Activated CD4-positive, alpha-beta T cell treated with anti-CD3 and anti-CD28 coated beads, Interleukin-2, amount 10 ng/mL, durations not matched to agents 24 days and 14 days (primary cell): ENCODE measurements at regions of chr11 and their contacts with region 1.

Region 1: GRCh38 chr11:128290106-128290840 is 297.1 kb downstream of the ETS1 start:
- DNase-seq: peak; percentile 94
- H3K4me3 Mint-ChIP-seq: peak overlapping the region; percentile 93
- H3K27ac Mint-ChIP-seq: peak overlapping the region; percentile 99
- H3K4me1 Mint-ChIP-seq: peaks cover 90% of the 10 kb centered on the region
- H3K27me3 Mint-ChIP-seq: no peaks in the 10 kb centered on the region

Region 2: DNA sequence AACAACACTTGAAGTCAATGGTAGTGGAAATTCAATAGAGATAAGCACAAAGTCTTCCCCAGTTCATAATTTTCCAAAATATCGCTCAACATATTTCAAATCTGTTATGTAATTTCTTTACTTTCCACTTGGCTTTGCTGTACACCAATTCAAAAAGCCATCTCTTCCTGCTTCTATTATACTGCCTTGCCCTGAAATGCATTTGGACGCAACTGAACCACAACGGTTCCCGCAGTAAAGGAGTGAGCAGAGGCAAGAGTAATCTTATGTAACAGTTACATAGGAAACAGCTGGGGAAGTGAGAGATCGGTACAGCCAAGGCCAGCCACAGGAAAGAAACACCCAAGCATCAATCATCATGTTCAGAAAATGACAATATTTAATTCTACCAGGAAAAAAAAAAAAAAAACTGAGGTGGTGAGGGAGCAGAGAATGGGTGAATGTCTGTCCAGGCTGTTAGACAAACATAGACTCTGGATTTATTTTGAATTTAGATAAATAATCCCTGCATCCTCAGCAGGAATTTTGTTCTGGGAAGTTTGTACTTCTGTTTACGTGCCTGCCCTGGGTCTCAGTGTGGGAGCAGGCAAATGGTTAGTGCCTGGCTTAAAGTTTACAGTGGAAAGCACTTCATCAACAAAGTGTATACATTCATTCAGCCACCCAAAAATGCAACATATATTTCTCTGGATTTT is 95.1 kb before region 1 on chr11:
- intact Hi-C with region 1: loop called (anchors 1 kb)
- DNase-seq: peak; percentile 84
- H3K4me3 Mint-ChIP-seq: peak overlapping the region; percentile 1
- H3K27ac Mint-ChIP-seq: peak overlapping the region; percentile 18
- H3K4me1 Mint-ChIP-seq: peaks cover 29% of the 10 kb centered on the region
- H3K27me3 Mint-ChIP-seq: no peaks in the 10 kb centered on the region

Region 3: GRCh38 chr11:128246364-128246801 is 43.9 kb before region 1 on chr11:
- intact Hi-C with region 1: no loop called
- DNase-seq: no peak
- H3K4me3 Mint-ChIP-seq: no peak overlapping the region
- H3K27ac Mint-ChIP-seq: no peak overlapping the region
- H3K4me1 Mint-ChIP-seq: no peaks in the 10 kb centered on the region
- H3K27me3 Mint-ChIP-seq: peaks cover 10% of the 10 kb centered on the region

Region 4: GRCh38 chr11:128302425-128303186 is 12.3 kb after region 1 on chr11:
- intact Hi-C with region 1: loop called (anchors 1 kb)
- DNase-seq: peak; percentile 94
- H3K4me3 Mint-ChIP-seq: peak overlapping the region; percentile 81
- H3K27ac Mint-ChIP-seq: peak overlapping the region; percentile 93
- H3K4me1 Mint-ChIP-seq: peaks cover 70% of the 10 kb centered on the region
- H3K27me3 Mint-ChIP-seq: no peaks in the 10 kb centered on the region

Region 5: GRCh38 chr11:128472128-128473089 is 182.1 kb after region 1 on chr11:
- intact Hi-C with region 1: loop called (anchors 1 kb)
- DNase-seq: peak; percentile 91
- H3K4me3 Mint-ChIP-seq: peak overlapping the region; percentile 85
- H3K27ac Mint-ChIP-seq: peak overlapping the region; percentile 96
- H3K4me1 Mint-ChIP-seq: peaks cover 95% of the 10 kb centered on the region
- H3K27me3 Mint-ChIP-seq: no peaks in the 10 kb centered on the region

Region 6: DNA sequence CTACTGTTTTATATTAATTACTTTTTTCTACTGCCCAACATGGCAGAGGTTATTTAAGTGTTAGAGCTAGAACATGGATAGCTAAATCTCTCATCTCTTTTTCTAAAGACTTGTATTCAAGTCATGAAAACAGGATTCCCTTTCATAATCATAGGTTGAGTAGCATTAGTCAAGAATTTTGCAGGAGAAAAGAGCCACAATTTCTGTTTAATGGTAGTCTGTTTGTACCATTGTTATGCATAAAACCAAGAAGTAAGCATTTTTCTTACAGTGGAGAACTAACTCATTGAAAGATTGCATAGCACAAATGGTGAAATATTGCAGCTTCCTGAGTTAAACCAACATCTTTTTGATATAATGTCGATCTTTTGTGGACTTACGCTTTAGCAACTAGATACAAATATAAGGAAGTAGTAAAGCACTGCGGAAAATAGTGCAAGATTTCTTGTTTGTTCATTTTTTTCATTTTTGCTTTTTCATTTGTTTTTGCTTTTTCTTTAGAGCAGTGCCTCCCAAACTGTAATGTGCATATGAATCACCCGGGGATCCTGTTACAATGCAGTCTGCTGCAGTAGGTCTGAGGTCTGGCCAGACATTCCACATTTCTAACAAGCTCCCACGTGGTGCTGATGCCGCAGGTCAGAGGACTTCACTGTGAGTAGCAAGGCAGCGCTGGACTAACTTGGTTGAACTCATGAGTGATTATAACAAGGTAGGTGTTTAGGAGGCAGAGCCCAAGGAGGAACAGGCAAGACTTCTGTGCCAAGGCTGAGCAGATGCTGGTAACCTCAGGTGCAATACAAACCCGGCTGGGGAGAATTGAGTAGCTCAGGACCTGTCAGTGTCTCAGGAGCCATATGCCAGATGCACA is 292.5 kb after region 1 on chr11:
- intact Hi-C with region 1: loop called (anchors 1 kb)
- DNase-seq: no peak
- H3K4me3 Mint-ChIP-seq: peak overlapping the region; percentile 59
- H3K27ac Mint-ChIP-seq: peak overlapping the region; percentile 81
- H3K4me1 Mint-ChIP-seq: peaks cover 35% of the 10 kb centered on the region
- H3K27me3 Mint-ChIP-seq: peaks cover 7% of the 10 kb centered on the region

Region 7: DNA sequence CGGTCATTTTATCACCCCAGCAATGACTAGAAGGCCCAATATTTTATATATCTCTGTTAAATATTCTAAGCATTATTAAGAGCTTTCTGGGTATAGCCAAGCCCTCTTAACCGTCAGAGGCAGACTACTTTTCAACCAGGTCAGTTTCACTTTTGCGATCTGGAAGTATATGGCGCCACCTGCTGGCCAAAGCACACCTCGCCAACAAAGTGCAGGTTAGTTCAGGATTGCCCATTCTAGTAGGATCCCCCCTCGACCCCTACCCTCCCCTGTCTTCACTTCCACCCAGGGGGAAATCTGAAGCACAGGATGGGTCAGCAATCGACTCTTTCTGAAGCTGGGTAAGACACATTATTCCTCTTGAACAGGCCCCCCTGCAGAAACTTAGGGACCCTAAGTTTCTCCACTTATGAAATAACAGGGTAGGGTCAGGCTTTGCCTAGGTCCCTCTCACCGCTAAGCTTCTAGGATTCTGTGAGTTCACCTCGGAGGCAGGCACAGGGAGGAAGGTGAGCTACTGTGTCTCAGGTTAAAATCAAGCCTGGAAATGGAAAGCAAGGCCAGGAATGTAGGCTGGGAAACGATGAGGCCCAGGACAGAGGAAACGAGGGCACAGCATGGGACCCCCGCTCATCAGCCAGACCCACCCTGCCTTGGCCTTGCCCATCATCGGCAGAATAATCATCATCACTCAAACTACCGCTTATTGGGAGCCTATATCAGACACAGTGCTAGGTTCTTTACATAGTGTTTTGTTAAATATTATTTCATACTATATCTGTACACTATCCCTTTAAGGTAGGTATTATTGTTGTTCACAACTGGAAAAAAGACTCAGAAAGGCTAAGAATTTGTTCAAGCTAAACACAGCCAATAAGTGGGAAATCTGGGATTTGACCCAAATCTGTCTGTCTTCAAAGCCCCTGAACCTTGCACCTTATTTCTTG is 541.2 kb after region 1 on chr11:
- intact Hi-C with region 1: loop called (anchors 2 kb)
- DNase-seq: peak; percentile 95
- H3K4me3 Mint-ChIP-seq: peak overlapping the region; percentile 53
- H3K27ac Mint-ChIP-seq: no peak overlapping the region
- H3K4me1 Mint-ChIP-seq: peaks cover 22% of the 10 kb centered on the region
- H3K27me3 Mint-ChIP-seq: no peaks in the 10 kb centered on the region